IMR-90 (cell line): ENCODE measurements at regions of chr2 and their contacts with region 1.

Region 1: DNA sequence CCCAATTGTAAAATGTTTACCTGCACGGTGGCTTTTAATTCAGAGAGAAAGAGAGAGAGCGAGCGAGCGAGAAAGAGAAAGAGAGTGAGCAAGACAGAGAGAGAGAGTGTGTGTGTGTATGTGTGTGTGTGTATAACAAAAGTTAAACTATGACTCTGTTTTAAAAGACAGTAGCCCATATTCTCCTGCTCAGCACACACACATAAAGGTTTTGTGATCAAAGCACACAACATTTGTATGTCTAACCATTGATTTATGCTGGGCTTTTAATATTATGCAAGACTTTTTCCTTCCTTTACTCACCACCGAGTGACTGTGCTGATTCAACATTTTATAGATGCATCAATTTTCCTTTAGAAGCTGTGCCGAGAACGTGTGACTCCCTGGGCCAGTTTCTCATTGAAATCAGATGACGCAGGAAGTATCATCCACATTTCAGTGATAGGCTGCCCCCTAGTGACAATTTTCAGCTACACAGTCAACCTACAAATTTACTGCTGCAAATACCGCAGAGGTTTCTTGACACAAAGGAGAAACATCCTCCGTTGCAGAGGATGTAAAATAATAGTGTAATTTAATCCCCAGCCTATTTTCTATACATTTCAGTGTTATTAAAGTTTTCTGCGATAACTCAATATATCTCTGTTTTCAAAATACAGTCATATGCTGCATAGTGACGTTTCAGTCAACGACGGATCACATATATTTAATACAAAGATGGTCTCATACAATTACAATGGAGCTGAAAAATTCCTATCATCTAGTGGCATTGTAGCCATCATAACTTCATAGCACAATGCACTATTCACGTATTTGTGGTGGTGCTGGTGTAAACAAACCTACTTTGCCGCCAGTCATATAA is 165.9 kb upstream of the TANK start:
- DNase-seq: peak; percentile 90
- ATAC-seq: peak; percentile 91
- H3K4me3 ChIP-seq: no peak overlapping the region
- H3K27ac ChIP-seq: no peak overlapping the region
- H3K4me1 ChIP-seq: no peaks in the 10 kb centered on the region
- H3K27me3 ChIP-seq: no peaks in the 10 kb centered on the region
- CTCF ChIP-seq: peak; percentile 90
- POLR2A ChIP-seq: no peak
- RAD21 ChIP-seq: peak; percentile 92

Region 2: GRCh38 chr2:160252278-160252887 is 742.0 kb before region 1 on chr2:
- CTCF ChIA-PET with region 1: interaction called, 3 read pairs
- POLR2A ChIA-PET with region 1: no interaction called
- dilution Hi-C with region 1: no loop called
- in situ Hi-C with region 1: no loop called
- intact Hi-C with region 1: loop called (anchors 2 kb)
- DNase-seq: peak; percentile 44
- ATAC-seq: peak; percentile 76
- H3K4me3 ChIP-seq: no peak overlapping the region
- H3K27ac ChIP-seq: no peak overlapping the region
- H3K4me1 ChIP-seq: peaks cover 6% of the 10 kb centered on the region
- H3K27me3 ChIP-seq: no peaks in the 10 kb centered on the region
- CTCF ChIP-seq: peak; percentile 69
- POLR2A ChIP-seq: no peak
- RAD21 ChIP-seq: peak; percentile 66

Region 3: DNA sequence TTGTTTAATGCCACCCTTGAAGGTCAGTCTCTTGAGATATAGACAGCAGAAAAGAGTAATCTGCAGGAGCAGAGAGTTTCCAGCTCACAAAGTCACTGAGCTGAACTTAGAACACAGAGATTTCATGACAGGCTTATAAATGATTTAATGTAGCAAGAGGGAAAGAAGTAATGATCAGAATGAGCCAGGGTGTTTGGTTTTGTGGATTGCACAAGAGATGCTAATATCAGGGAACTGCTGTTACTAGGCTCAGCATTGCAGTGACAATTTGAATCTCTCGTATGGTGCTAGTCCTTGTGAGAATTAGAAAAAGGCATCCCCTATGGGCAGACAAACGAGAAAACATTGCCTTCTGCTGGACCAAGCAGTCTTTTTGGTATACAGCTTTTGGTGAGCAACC is 732.6 kb before region 1 on chr2:
- CTCF ChIA-PET with region 1: no interaction called
- POLR2A ChIA-PET with region 1: no interaction called
- dilution Hi-C with region 1: no loop called
- in situ Hi-C with region 1: loop called (anchors 5 kb)
- intact Hi-C with region 1: no loop called
- DNase-seq: no peak
- ATAC-seq: 0 out of 2 replicates have a peak, but pooled peaks have one; percentile 27
- H3K4me3 ChIP-seq: no peak overlapping the region
- H3K27ac ChIP-seq: no peak overlapping the region
- H3K4me1 ChIP-seq: peaks cover 2% of the 10 kb centered on the region; the same call in 1 of the 2 replicates
- H3K27me3 ChIP-seq: no peaks in the 10 kb centered on the region
- CTCF ChIP-seq: no peak
- POLR2A ChIP-seq: no peak
- RAD21 ChIP-seq: no peak

Region 4: DNA sequence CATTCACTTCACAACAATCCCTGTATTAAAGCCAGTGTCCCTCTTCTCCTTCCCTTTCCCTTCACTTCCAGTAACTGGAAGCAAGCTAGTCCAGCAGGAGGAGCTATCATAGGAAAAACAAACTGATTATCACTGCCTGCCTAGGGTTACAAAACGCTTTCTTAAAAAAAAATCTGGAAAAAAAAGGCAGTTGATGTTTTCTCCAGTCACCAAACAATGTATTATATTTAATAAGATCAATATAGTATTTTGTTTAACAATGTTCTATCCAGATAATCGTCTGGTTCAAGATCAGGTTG is 715.5 kb before region 1 on chr2:
- CTCF ChIA-PET with region 1: no interaction called
- POLR2A ChIA-PET with region 1: no interaction called
- dilution Hi-C with region 1: no loop called
- in situ Hi-C with region 1: no loop called
- intact Hi-C with region 1: loop called (anchors 5 kb)
- DNase-seq: peak; percentile 57
- ATAC-seq: peak; percentile 82
- H3K4me3 ChIP-seq: no peak overlapping the region
- H3K27ac ChIP-seq: no peak overlapping the region
- H3K4me1 ChIP-seq: peaks cover 1% of the 10 kb centered on the region; the same call in 1 of the 2 replicates
- H3K27me3 ChIP-seq: no peaks in the 10 kb centered on the region
- CTCF ChIP-seq: peak; percentile 52
- POLR2A ChIP-seq: no peak
- RAD21 ChIP-seq: peak; percentile 50

Region 5: GRCh38 chr2:160324161-160324800 is 670.1 kb before region 1 on chr2:
- CTCF ChIA-PET with region 1: no interaction called
- POLR2A ChIA-PET with region 1: no interaction called
- dilution Hi-C with region 1: no loop called
- in situ Hi-C with region 1: loop called (anchors 5 kb)
- intact Hi-C with region 1: no loop called
- DNase-seq: peak; percentile 70
- ATAC-seq: peak; percentile 69
- H3K4me3 ChIP-seq: no peak overlapping the region
- H3K27ac ChIP-seq: no peak overlapping the region
- H3K4me1 ChIP-seq: peaks cover 19% of the 10 kb centered on the region
- H3K27me3 ChIP-seq: no peaks in the 10 kb centered on the region
- CTCF ChIP-seq: peak; percentile 71
- POLR2A ChIP-seq: no peak
- RAD21 ChIP-seq: peak; percentile 73

Region 6: DNA sequence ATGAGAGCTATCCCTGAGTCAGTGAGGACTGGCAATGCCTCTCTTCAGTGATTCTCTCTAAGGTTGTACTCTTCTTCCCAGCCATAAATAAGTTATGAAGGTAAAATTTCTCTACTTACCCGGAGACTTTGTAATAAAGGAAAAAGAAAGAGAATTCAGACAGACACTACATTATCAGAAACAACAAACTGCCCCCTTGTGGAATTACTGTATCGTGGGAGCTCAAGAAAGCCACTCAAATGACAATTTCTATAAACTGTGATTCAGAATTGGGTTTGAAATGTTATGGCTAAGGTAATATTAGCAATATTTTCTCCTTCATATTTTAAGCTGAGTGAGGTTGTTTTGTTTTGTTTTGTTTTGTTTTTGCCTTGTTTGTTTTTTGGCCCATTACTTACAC is 10.0 kb after region 1 on chr2:
- CTCF ChIA-PET with region 1: interaction called, 28 read pairs
- POLR2A ChIA-PET with region 1: no interaction called
- dilution Hi-C with region 1: no loop called
- in situ Hi-C with region 1: no loop called
- intact Hi-C with region 1: no loop called
- DNase-seq: peak; percentile 20
- ATAC-seq: peak; percentile 46; the same call in 1 of the 2 replicates
- H3K4me3 ChIP-seq: no peak overlapping the region
- H3K27ac ChIP-seq: no peak overlapping the region
- H3K4me1 ChIP-seq: peaks cover 2% of the 10 kb centered on the region; the same call in 1 of the 2 replicates
- H3K27me3 ChIP-seq: no peaks in the 10 kb centered on the region
- CTCF ChIP-seq: peak; percentile 53
- POLR2A ChIP-seq: no peak
- RAD21 ChIP-seq: peak; percentile 39

Region 7: GRCh38 chr2:161063157-161063954 is 69.0 kb after region 1 on chr2:
- CTCF ChIA-PET with region 1: interaction called, 8 read pairs
- POLR2A ChIA-PET with region 1: no interaction called
- dilution Hi-C with region 1: no loop called
- in situ Hi-C with region 1: no loop called
- intact Hi-C with region 1: loop called (anchors 1 kb)
- DNase-seq: peak; percentile 86
- ATAC-seq: peak; percentile 95
- H3K4me3 ChIP-seq: no peak overlapping the region
- H3K27ac ChIP-seq: no peak overlapping the region
- H3K4me1 ChIP-seq: peaks cover 6% of the 10 kb centered on the region
- H3K27me3 ChIP-seq: no peaks in the 10 kb centered on the region; the same call in 1 of the 2 replicates
- CTCF ChIP-seq: peak; percentile 90
- POLR2A ChIP-seq: peak; percentile 41; the same call in 1 of the 2 replicates
- RAD21 ChIP-seq: peak; percentile 92